Left ventricle myocardium inferior (tissue), 1 donor: ENCODE measurements at regions of chr15 and their contacts with region 1.

Region 1: GRCh38 chr15:71730277-71731144 is 79.8 kb upstream of the NR2E3 start:
- DNase-seq: peak; percentile 35
- H3K4me3 ChIP-seq: no peak overlapping the region
- H3K27ac ChIP-seq: peak overlapping the region; percentile 47
- H3K4me1 ChIP-seq: peaks cover 31% of the 10 kb centered on the region
- H3K27me3 ChIP-seq: no peaks in the 10 kb centered on the region
- CTCF ChIP-seq: peak; percentile 91

Region 2: GRCh38 chr15:71448688-71449114 is 281.8 kb before region 1 on chr15:
- intact Hi-C with region 1: loop called (anchors 5 kb)
- DNase-seq: no peak
- H3K4me3 ChIP-seq: no peak overlapping the region
- H3K27ac ChIP-seq: peak overlapping the region; percentile 89
- H3K4me1 ChIP-seq: peaks cover 58% of the 10 kb centered on the region
- H3K27me3 ChIP-seq: no peaks in the 10 kb centered on the region
- CTCF ChIP-seq: peak; percentile 96

Region 3: DNA sequence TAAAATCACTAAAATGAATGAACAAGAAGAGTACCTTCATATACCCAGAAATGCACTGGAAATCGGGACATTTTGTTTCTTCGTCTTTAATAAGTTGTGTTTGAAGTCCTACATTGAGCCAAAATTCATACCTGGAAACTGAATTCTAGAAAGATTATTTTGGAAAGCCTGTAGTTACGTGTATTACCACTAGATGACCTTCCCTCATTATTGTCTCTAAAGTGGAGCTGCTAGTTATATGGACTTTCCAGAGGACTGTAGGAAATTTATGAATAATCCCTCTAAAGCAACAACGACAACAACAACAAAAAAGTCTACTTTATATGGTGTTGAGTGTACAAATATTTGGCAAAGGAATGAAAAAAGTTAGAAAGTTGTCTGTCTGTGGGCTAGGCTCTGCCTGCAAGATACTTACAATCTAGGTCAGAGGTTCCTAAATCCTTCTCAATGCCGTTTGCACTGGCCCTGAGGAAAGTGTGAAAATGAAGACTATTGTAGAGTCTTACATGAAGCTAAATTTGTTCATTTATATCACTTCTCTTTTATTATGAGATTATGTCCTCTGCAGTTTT is 155.0 kb before region 1 on chr15:
- intact Hi-C with region 1: loop called (anchors 10 kb)
- DNase-seq: no peak
- H3K4me3 ChIP-seq: no peak overlapping the region
- H3K27ac ChIP-seq: peak overlapping the region; percentile 1
- H3K4me1 ChIP-seq: peaks cover 20% of the 10 kb centered on the region
- H3K27me3 ChIP-seq: no peaks in the 10 kb centered on the region
- CTCF ChIP-seq: peak; percentile 66

Region 4: DNA sequence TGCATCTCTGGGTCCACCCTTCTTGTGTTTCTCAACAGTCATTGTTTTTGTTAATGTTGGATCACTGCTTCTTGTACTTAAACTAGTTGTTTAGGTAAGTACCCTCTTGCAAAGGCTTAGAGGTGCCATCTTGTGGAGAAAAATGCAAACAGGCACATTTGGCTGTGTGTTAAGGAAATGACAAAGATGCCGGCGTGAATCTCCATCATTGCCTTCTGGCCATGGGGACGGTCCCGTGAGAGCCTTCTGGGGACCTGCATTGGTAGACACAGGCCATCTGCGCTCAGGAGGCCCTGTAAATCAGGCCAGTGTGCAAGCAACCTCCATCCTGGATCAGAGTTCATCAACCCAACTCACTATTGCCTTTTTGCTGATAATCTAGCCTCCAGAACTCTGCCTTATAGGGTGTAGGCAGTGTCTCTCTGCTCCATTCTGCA is 78.7 kb before region 1 on chr15:
- intact Hi-C with region 1: no loop called
- DNase-seq: no peak
- H3K4me3 ChIP-seq: no peak overlapping the region
- H3K27ac ChIP-seq: peak overlapping the region; percentile 66
- H3K4me1 ChIP-seq: peaks cover 60% of the 10 kb centered on the region
- H3K27me3 ChIP-seq: no peaks in the 10 kb centered on the region
- CTCF ChIP-seq: peak; percentile 62

Region 5: DNA sequence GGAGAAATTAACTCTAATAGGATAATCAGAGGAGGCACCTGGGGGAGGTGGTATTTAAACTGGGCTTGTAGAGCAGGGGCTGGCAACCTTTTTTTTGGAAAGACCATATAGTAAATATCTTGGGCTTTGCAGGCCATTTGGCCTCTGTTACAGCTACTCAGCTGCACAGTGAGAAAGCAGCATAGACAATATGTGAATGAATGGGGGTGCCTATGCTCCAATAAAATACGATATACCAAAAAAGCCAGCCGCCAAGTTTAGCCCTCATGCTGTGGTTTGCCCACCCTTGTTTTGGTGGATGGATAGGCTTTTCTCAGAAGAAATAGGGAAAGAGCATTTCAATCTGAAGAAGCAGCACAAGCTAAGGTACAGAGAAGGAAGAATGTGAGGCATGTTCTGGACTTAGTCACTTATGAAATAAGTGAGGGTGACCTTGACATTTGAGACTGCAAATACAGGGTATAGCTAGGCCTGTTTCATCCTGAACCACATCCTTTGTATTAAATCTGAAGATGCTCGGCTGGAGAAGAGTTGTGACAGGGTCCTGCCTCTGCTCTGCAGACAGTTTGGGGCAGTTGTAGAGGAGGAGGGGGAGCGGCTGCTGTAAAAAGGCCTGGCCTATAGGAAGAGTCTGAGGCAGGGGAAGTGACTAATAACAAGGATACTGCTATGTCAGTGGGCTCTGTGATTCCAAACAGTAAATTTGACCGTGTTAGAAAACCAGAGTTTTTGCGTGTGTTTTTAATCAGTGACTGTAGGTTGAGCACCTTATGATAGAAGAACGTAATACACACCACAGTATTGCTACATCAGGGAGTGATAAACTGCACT is 51.1 kb before region 1 on chr15:
- intact Hi-C with region 1: no loop called
- DNase-seq: no peak
- H3K4me3 ChIP-seq: no peak overlapping the region
- H3K27ac ChIP-seq: peak overlapping the region; percentile 81
- H3K4me1 ChIP-seq: peaks cover 55% of the 10 kb centered on the region
- H3K27me3 ChIP-seq: no peaks in the 10 kb centered on the region
- CTCF ChIP-seq: no peak